Spleen (tissue), 13 donors: ENCODE measurements at regions of chr9 and their contacts with region 1.

Region 1: GRCh38 chr9:71911253-71912074 is at the start of gene C9orf85:
- DNase-seq: peak; percentile 100
- H3K4me3 ChIP-seq: peak within 1 kb of the TSS; percentile 80 to 97 (median 90)
- H3K27ac ChIP-seq: peak within 1 kb of the TSS; percentile 86 to 97 (median 94)
- H3K4me1 ChIP-seq: peaks cover 20 to 79% (median 45%) of the 10 kb centered on the region in 6 donors
- H3K27me3 ChIP-seq: no peaks in the 10 kb centered on the region
- CTCF ChIP-seq: peak in 4 of 11 experiments; percentile 9 to 42 (median 28)
- POLR2A ChIP-seq: peak in 1 of 3 donors; percentile 25
- total RNA-seq, gene C9orf85: 7.3 to 17.8 (median 10.0) TPM

Region 2: DNA sequence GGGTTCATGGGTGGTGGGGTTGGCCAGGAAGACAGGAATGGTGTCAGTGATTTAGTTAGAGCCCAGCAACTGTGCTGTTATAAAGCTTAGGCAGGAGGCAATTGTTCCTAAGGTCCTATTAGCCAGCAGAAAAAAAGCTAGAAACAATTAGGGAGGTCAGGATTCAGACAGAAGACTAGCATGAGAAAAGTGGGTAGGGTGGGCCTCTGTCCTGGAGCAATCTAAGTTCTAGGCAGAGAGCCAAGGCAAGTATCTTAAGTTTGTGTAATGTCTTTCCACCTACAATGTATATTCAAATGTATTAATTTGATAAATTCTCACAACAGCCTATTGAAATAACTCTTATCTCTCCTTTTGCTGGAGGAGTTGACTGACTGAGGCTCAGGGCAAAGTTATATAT is 459.7 kb after region 1 on chr9:
- intact Hi-C with region 1: loop called (anchors 10 kb)
- DNase-seq: no peak
- H3K4me3 ChIP-seq: no peak overlapping the region
- H3K27ac ChIP-seq: no peak overlapping the region
- H3K4me1 ChIP-seq: peaks cover 0 to 7% (median 4%) of the 10 kb centered on the region in 6 donors
- H3K27me3 ChIP-seq: no peaks in the 10 kb centered on the region
- CTCF ChIP-seq: no peak
- POLR2A ChIP-seq: no peak